ENCODE measurements at regions of chr3 and their contacts with region 1.

Region 1: DNA sequence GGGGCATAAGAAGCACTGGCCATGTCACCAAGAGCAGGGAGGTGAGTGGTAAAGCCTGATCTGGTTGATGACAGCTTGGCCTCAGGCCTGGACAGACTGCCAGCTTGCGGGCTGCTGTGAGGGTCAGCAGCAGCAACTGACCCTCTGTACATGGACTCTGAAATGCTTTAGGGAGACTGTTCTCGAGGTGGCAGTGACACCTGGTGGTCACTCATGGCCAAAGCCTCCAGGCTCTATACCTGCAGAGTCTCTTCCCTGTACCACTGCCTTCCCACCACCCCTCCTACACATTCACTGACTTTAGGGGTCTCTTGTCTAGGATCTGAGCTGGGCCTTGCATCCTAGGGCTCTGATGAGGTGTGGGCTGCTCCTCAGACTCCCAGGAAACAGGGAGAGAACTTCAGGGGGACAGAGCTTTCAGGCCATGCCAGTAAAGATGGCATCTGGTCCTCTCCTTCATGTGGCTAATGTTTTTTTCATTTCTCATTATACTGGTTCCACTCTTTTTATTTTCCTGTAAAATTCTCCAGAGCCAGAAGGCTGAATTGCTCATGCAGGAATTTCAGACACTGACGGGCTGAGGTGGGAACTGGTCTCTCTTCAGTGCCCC is 17.2 kb upstream of the TIMP4 start:
- DNase-seq: peak in 9 of 10 donors; percentile 21 to 92 (median 64)

Region 2: DNA sequence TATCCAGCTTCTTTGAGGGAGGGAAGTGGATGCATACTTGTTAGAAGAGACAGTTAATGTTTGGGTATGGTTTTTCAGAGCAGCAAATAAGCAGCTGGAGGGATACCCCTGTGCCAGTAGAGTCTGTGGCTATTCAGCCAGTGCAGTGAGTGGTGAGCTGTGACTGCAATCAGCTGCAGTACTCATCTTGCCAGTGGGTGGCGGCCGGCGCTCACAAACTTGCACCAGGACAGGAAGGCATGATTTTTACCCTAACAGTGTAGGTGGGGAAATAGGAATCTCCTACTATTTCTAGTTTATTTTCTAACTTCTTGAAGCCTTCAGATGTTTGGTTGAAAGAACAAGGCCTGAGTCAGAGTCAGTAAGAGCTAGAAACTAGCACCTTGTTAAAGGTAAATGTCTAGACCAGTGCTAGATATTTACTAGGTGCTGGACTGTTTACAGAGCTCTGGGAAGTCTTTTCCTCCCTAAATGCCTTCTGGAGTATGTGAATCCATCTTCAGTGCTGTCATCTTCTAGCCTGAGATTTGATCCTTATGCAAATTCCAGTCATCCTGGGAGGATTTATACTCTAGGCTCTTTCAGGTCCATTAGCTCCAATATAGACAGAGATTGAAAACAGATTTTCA is 40.8 kb before region 1 on chr3:
- intact Hi-C with region 1: loop called (anchors 1 kb)
- DNase-seq: peak; percentile 59 to 96 (median 78)

Region 3: DNA sequence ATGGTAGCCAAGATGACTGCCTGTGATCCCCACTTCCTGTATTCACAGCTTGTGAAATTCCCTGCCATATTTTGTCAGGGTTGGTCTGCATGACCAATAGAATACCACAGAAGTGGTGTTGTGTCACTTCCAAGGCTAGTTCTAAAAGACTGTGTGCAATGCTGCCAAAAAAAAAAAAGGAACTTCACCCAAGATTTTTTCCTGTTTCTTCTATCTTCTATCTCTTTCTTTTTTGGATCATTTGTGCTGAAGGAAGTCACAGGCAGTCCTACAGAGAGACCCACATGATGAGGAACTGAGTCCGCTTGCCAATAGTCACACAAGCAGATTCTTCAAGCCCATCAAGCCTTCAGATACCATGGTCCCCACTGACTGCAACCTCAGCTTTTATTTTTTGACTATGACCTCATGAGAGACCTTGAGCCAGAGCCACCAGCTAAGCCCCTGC is 506.0 kb after region 1 on chr3:
- intact Hi-C with region 1: no loop called
- DNase-seq: no peak